ENCODE measurements at regions of chr10 and their contacts with region 1.

Region 1: GRCh38 chr10:78784546-78784945 is 284.2 kb upstream of the ZMIZ1 start:
- DNase-seq: peak in 1 of 10 donors; percentile 26
- H3K4me3 ChIP-seq: no peak overlapping the region
- H3K27ac ChIP-seq: peak overlapping the region in 14 of 59 donors; percentile 22 to 79 (median 50)
- H3K27me3 ChIP-seq: no peaks in the 10 kb centered on the region
- CTCF ChIP-seq: no peak

Region 2: GRCh38 chr10:78846760-78847159 is 62.2 kb after region 1 on chr10:
- intact Hi-C with region 1: loop called in 1 of 2 experiments (anchors 5 kb)
- DNase-seq: peak; percentile 45 to 83 (median 67)
- H3K4me3 ChIP-seq: no peak overlapping the region
- H3K27ac ChIP-seq: peak overlapping the region in 39 of 59 donors; percentile 1 to 75 (median 47)
- H3K27me3 ChIP-seq: no peaks in the 10 kb centered on the region
- CTCF ChIP-seq: peak in 1 of 56 donors; percentile 14

Measured in dorsolateral prefrontal cortex (tissue), 120 donors.